ENCODE measurements at regions of chr18 and their contacts with region 1.

Region 1: DNA sequence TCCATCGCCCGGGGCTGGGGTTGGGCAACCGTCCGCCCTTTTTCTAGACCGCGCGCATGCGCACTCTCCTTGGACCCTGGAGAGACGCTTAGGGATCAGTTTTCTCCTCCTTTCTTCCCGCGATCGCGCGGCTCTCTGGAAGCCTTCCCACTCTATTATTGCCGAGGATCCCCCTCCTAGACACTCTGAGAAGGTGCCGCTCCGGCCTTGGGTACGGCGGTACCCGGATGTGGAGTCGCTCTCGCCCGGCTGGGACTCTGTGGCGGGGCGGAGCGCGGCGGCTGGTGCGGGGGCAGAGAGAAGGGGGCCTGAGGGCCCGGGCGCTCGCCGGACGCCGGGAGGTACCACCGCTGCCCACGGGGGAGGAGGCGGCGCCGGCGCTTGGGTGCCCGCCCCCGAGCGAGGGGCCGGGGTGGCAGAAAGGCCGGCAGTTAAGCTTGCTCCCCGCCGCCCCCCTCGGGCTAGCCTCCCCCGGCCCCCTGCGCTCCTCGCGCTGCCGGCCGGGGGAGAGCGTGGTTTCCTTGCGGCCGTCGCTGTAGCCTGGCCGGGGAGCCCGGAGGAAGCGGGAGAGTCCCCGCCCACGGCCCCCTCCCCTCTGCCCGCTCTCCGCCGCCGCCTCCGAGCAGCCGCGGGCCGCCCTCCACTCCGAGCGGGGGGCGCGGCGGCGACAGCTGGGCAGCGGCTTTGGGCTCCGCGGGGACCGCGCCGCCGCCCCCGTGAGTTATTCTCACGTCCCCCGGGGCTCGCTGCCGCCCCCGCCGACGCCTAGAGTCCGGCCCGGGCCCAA is at the start of gene MIB1:
- H3K4me3 Mint-ChIP-seq: peak within 1 kb of the TSS; percentile 91
- H3K27ac Mint-ChIP-seq: peak within 1 kb of the TSS; percentile 94
- H3K4me1 Mint-ChIP-seq: peaks cover 25% of the 10 kb centered on the region
- H3K27me3 Mint-ChIP-seq: no peaks in the 10 kb centered on the region

Region 2: DNA sequence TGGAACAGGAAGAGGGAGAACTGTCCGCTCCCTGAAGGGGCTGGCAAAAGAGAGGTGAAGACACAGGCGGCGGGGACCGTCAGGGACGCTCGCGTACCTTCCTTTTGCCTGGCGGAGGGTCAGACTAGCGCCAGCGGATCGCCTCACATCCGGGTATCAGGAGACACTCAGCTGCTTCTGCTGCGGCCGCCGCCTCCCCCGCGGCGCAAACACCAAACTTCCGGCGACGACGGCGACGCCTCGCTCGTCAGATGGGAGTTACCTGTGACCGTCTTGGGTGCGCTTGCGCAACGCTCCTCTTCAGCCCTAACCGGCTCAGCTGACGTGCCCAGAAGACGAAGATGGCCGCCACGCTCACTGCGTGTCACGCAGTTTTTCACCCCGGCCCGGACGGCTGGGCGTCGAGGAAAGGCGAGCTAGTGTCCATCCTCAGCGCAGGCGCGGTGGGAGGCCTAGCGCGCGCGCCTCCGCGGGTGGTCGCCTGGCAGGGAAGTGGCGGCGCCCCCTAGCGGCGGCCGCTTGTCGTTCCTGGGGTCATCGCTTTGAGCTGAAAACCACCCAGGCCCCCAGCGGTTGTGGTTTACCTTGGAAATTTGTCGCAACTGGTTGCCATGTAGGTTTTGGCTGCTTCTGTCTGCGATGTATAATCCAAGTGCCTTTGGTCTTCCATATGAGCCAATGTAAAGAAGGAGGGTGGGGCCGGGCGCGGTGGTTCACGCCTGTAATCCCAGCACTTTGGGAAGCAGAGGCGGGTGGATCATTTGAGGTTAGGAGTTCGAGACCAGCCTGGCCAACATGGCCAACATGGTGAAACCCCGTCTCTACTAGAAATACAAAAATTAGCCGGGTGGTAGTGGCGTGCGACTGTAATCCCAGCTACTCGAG is 140.1 kb before region 1 on chr18 and contains the start of gene ESCO1:
- intact Hi-C with region 1: loop called (anchors 2 kb)
- H3K4me3 Mint-ChIP-seq: peak within 1 kb of the TSS; percentile 95
- H3K27ac Mint-ChIP-seq: peak within 1 kb of the TSS; percentile 98
- H3K4me1 Mint-ChIP-seq: peaks cover 24% of the 10 kb centered on the region
- H3K27me3 Mint-ChIP-seq: no peaks in the 10 kb centered on the region

Region 3: GRCh38 chr18:21704603-21705364 is 36.1 kb before region 1 on chr18 and contains the start of gene ABHD3:
- intact Hi-C with region 1: loop called (anchors 1 kb)
- H3K4me3 Mint-ChIP-seq: peak within 1 kb of the TSS; percentile 94
- H3K27ac Mint-ChIP-seq: peak within 1 kb of the TSS; percentile 92
- H3K4me1 Mint-ChIP-seq: peaks cover 24% of the 10 kb centered on the region
- H3K27me3 Mint-ChIP-seq: no peaks in the 10 kb centered on the region

Region 4: DNA sequence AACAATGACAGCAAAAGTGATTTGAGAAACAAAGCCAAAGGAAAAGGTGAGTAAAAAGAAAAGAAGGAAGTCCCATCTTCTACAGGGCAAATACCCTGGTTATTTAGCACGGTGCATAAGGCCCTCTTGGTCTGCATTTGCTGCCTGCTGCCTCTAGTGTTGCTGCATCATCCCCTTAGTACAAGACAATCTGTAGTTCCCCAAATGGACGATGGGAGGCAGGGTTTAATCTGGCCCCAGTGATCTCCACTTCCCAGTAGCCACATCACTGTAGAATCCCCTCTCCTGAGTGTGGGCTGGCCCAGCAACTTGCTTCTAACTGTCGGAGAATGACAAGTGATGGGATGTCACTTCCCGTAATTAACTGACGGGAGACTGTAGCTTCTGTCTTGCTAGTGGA is 591.7 kb after region 1 on chr18:
- intact Hi-C with region 1: no loop called
- H3K4me3 Mint-ChIP-seq: no peak overlapping the region
- H3K27ac Mint-ChIP-seq: no peak overlapping the region
- H3K4me1 Mint-ChIP-seq: no peaks in the 10 kb centered on the region
- H3K27me3 Mint-ChIP-seq: peaks cover 9% of the 10 kb centered on the region